Heart left ventricle (tissue), 16 donors: ENCODE measurements at regions of chr17 and their contacts with region 1.

Region 1: GRCh38 chr17:56939901-56940343 is 20.9 kb downstream of the COIL start:
- DNase-seq: no peak
- ATAC-seq: peak in 3 of 4 donors; percentile 43 to 67 (median 57)
- H3K4me3 ChIP-seq: no peak overlapping the region
- H3K27ac ChIP-seq: no peak overlapping the region
- H3K4me1 ChIP-seq: peaks cover 0 to 20% (median 0%) of the 10 kb centered on the region in 12 donors
- H3K27me3 ChIP-seq: no peaks in the 10 kb centered on the region
- CTCF ChIP-seq: peak; percentile 55 to 81 (median 70)
- POLR2A ChIP-seq: no peak

Region 2: GRCh38 chr17:56592487-56593085 is 347.3 kb before region 1 on chr17:
- intact Hi-C with region 1: loop called in 1 of 10 experiments (anchors 10 kb)
- DNase-seq: peak; percentile 35 to 86 (median 59)
- ATAC-seq: peak; percentile 55 to 85 (median 82)
- H3K4me3 ChIP-seq: peak overlapping the region; percentile 42 to 71 (median 56)
- H3K27ac ChIP-seq: no peak overlapping the region
- H3K4me1 ChIP-seq: peaks cover 4 to 56% (median 22%) of the 10 kb centered on the region in 12 donors
- H3K27me3 ChIP-seq: peaks cover 5 to 69% (median 37%) of the 10 kb centered on the region in 9 donors
- CTCF ChIP-seq: peak; percentile 72 to 99 (median 97)
- POLR2A ChIP-seq: no peak

Region 3: DNA sequence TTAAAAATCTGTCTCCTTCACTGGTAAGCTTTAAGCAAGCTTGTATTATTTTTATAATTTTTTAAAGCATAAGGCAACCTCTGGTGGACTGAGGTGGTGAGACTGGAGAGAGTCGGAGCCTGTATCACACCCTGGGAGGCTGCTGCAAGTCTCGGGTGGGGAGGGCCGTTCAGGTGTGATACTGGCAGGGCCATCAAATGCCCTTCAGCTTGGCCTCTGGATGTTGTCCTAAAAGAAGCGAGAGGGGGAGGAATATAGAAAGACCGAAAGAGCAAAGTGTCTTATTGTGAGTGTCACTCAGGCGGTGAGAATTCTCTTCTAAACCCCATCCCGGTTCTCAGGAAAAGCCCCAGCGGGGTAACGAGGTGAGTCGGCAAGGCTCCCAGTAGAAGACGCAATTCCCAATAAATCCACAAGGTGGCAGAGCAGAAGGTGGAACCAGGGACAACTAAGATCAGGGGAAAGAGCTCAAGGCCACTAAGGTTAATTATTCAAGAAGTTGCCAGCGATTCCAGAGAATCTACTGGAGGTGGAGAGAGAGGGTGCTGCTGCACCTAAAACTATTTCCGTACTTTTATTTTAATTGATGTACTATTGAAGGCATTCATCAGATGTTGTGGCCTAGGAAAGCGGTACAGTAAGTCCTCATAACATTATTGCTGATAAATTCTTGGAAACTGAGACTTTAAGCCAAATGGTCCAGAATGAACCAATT is 120.3 kb before region 1 on chr17:
- intact Hi-C with region 1: loop called (anchors 1 to 5 kb)
- DNase-seq: peak in 4 of 5 donors; percentile 34 to 60 (median 48)
- ATAC-seq: peak; percentile 49 to 85 (median 74)
- H3K4me3 ChIP-seq: no peak overlapping the region
- H3K27ac ChIP-seq: no peak overlapping the region
- H3K4me1 ChIP-seq: peaks cover 0 to 25% (median 7%) of the 10 kb centered on the region in 12 donors
- H3K27me3 ChIP-seq: no peaks in the 10 kb centered on the region
- CTCF ChIP-seq: peak; percentile 81 to 93 (median 86)
- POLR2A ChIP-seq: no peak

Region 4: GRCh38 chr17:56833809-56834379 is 106.0 kb before region 1 on chr17 and contains the starts of genes C17orf67 and DGKE:
- intact Hi-C with region 1: loop called in 1 of 10 experiments (anchors 5 kb)
- DNase-seq: peak; percentile 97 to 99 (median 99)
- ATAC-seq: peak; percentile 97 to 99 (median 99)
- H3K4me3 ChIP-seq: peak within 1 kb of the TSS; percentile 64 to 92 (median 78)
- H3K27ac ChIP-seq: peak within 1 kb of the TSS; percentile 80 to 96 (median 88)
- H3K4me1 ChIP-seq: peaks cover 0 to 40% (median 14%) of the 10 kb centered on the region in 12 donors
- H3K27me3 ChIP-seq: no peaks in the 10 kb centered on the region
- CTCF ChIP-seq: no peak
- POLR2A ChIP-seq: peak in 1 of 2 donors; percentile 67
- total RNA-seq, gene C17orf67: 0.25 to 1.1 (median 0.48) TPM
- total RNA-seq, gene DGKE: 1.9 to 4.1 (median 3.0) TPM

Region 5: GRCh38 chr17:56870081-56870691 is 69.7 kb before region 1 on chr17:
- intact Hi-C with region 1: loop called in 1 of 10 experiments (anchors 10 kb)
- DNase-seq: no peak
- ATAC-seq: no peak
- H3K4me3 ChIP-seq: no peak overlapping the region
- H3K27ac ChIP-seq: no peak overlapping the region
- H3K4me1 ChIP-seq: no peaks in the 10 kb centered on the region
- H3K27me3 ChIP-seq: no peaks in the 10 kb centered on the region
- CTCF ChIP-seq: no peak
- POLR2A ChIP-seq: no peak

Region 6: GRCh38 chr17:56891784-56892183 is 48.1 kb before region 1 on chr17:
- intact Hi-C with region 1: loop called in 3 of 10 experiments (anchors 2 to 5 kb)
- DNase-seq: peak in 1 of 5 donors; percentile 36
- ATAC-seq: peak in 1 of 4 donors; percentile 33
- H3K4me3 ChIP-seq: no peak overlapping the region
- H3K27ac ChIP-seq: no peak overlapping the region
- H3K4me1 ChIP-seq: peaks cover 0 to 9% (median 0%) of the 10 kb centered on the region in 12 donors
- H3K27me3 ChIP-seq: no peaks in the 10 kb centered on the region
- CTCF ChIP-seq: peak in 9 of 12 donors; percentile 16 to 50 (median 41)
- POLR2A ChIP-seq: no peak

Region 7: DNA sequence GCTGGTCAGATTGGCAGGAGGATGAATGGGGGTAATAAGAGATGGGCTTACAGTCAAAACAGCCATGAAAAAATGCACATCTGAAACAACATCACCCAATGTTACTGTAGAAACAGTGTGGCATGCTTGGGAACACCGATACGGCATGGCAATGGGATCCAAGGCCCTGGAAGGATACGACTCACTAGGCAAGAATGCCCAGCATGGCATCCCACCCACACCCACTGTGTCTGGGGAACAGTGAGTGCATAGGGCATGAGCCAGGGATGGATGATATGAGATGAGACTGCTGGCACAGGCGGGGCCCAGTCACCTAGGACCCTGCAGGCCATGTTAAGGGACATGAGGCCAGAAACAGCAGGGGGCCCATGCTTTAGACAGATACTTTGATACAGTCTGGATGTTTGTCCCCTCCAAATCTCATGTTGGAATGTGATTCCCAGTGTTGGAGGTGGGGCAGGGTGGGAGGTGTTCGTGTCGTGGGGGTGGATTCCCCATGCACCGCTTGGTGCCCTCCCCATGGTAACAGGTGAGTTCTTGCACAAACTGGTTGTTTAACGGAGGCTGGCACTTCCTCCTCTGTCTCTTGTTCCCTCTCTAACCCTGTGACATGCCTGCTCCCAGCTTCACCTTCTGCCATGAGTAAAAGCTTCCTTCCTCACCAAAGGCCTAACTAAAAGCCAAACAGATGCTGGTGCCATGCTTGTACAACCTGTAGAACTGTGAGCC is 37.4 kb before region 1 on chr17:
- intact Hi-C with region 1: loop called in 1 of 10 experiments (anchors 5 kb)
- DNase-seq: no peak
- ATAC-seq: peak in 1 of 4 donors; percentile 27
- H3K4me3 ChIP-seq: no peak overlapping the region
- H3K27ac ChIP-seq: no peak overlapping the region
- H3K4me1 ChIP-seq: peaks cover 0 to 25% (median 5%) of the 10 kb centered on the region in 12 donors
- H3K27me3 ChIP-seq: no peaks in the 10 kb centered on the region
- CTCF ChIP-seq: no peak
- POLR2A ChIP-seq: no peak